ENCODE measurements at regions of chr3 and their contacts with region 1.

Region 1: GRCh38 chr3:50272911-50273693 is 4.2 kb downstream of the SEMA3B start:
- DNase-seq: peak; percentile 89 to 90 (median 90)
- ATAC-seq: peak; percentile 84 to 87 (median 85)
- H3K4me3 ChIP-seq: peak overlapping the region; percentile 4 to 31 (median 27)
- H3K27ac ChIP-seq: no peak overlapping the region
- H3K4me1 ChIP-seq: peaks cover 0 to 31% (median 5%) of the 10 kb centered on the region in 4 donors
- H3K27me3 ChIP-seq: no peaks in the 10 kb centered on the region
- CTCF ChIP-seq: peak; percentile 97 to 99 (median 98)
- POLR2A ChIP-seq: no peak

Region 2: GRCh38 chr3:50192689-50193141 is 80.4 kb before region 1 on chr3:
- intact Hi-C with region 1: loop called in 1 of 2 experiments (anchors 5 kb)
- DNase-seq: peak in 1 of 3 donors; percentile 53
- ATAC-seq: peak in 1 of 4 donors; percentile 7
- H3K4me3 ChIP-seq: no peak overlapping the region
- H3K27ac ChIP-seq: no peak overlapping the region
- H3K4me1 ChIP-seq: peaks cover 0 to 44% (median 12%) of the 10 kb centered on the region in 4 donors
- H3K27me3 ChIP-seq: no peaks in the 10 kb centered on the region
- CTCF ChIP-seq: peak; percentile 86 to 91 (median 88)
- POLR2A ChIP-seq: no peak

Region 3: DNA sequence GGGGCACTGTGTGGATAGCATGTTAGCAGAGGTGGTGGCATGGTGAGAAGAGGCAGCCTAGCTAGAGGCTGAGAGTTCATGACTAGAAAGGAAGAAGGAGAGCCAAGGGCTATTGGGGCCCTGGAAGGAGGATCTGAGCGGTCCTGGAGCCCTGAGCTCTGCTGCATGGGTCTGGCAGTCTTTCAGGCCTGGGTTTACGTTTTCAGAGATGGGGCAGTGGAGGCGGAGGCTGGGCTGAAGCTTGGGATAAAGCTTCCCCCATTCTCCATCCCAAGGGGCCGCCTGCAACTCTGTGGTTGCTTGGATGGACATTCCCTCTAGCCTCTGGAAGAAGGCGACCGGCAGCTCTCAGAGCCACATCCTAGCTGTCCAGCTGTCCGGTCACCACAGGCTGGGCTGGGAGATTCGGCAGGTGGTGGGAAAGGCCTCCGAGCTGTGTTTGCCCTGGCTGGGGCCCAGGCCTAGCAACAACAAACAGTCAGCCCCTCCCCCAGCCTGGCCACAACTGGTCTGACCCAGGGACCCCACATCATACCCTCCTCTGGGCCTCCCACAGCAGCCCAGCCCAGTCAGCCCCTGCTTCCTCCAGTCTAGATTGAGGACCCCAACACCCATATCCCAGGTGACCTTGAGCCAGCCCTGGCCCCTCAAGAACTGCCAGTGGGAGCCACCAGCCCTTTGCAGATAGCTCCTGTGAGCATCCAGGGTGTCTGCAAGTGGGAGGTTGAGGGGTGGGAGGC is 69.8 kb before region 1 on chr3:
- intact Hi-C with region 1: no loop called
- DNase-seq: peak; percentile 75 to 84 (median 83)
- ATAC-seq: peak; percentile 37 to 56 (median 47)
- H3K4me3 ChIP-seq: no peak overlapping the region
- H3K27ac ChIP-seq: peak overlapping the region in 2 of 3 donors; percentile 98 to 99
- H3K4me1 ChIP-seq: peaks cover 0 to 55% (median 29%) of the 10 kb centered on the region in 4 donors
- H3K27me3 ChIP-seq: no peaks in the 10 kb centered on the region
- CTCF ChIP-seq: no peak
- POLR2A ChIP-seq: peak; percentile 38

Region 4: GRCh38 chr3:50227390-50228183 is 45.5 kb before region 1 on chr3:
- intact Hi-C with region 1: loop called (anchors 5 kb)
- DNase-seq: peak; percentile 94 to 95 (median 95)
- ATAC-seq: peak; percentile 84 to 93 (median 88)
- H3K4me3 ChIP-seq: peak overlapping the region; percentile 71 to 85 (median 72)
- H3K27ac ChIP-seq: peak overlapping the region in 2 of 3 donors; percentile 62 to 65
- H3K4me1 ChIP-seq: peaks cover 0 to 16% (median 0%) of the 10 kb centered on the region in 4 donors
- H3K27me3 ChIP-seq: no peaks in the 10 kb centered on the region
- CTCF ChIP-seq: peak; percentile 86 to 98 (median 93)
- POLR2A ChIP-seq: no peak

Region 5: GRCh38 chr3:50321336-50322114 is 48.4 kb after region 1 on chr3:
- intact Hi-C with region 1: loop called (anchors 5 kb)
- DNase-seq: peak; percentile 91 to 93 (median 92)
- ATAC-seq: peak; percentile 73 to 84 (median 77)
- H3K4me3 ChIP-seq: peak overlapping the region; percentile 88 to 89 (median 89)
- H3K27ac ChIP-seq: peak overlapping the region; percentile 98 to 99 (median 98)
- H3K4me1 ChIP-seq: peaks cover 0 to 56% (median 16%) of the 10 kb centered on the region in 4 donors
- H3K27me3 ChIP-seq: no peaks in the 10 kb centered on the region
- CTCF ChIP-seq: peak; percentile 34 to 52 (median 43)
- POLR2A ChIP-seq: peak; percentile 77

Region 6: GRCh38 chr3:50327943-50328691 is 55.0 kb after region 1 on chr3 and contains the start of gene TUSC2:
- intact Hi-C with region 1: loop called (anchors 5 kb)
- DNase-seq: peak; percentile 97 to 98 (median 97)
- ATAC-seq: peak; percentile 82 to 89 (median 86)
- H3K4me3 ChIP-seq: peak within 1 kb of the TSS; percentile 82 to 93 (median 83)
- H3K27ac ChIP-seq: peak within 1 kb of the TSS in 2 of 3 donors; percentile 52 to 72
- H3K4me1 ChIP-seq: peaks cover 0 to 19% (median 11%) of the 10 kb centered on the region in 4 donors
- H3K27me3 ChIP-seq: no peaks in the 10 kb centered on the region
- CTCF ChIP-seq: no peak
- POLR2A ChIP-seq: peak; percentile 68
- total RNA-seq, gene TUSC2: 9.7 to 36.9 (median 12.5) TPM

Measured in right lobe of liver (tissue), 6 donors.